ENCODE measurements at regions of chr2 and their contacts with region 1.

Region 1: GRCh38 chr2:43524177-43524965 is 71.5 kb downstream of the THADA start:
- DNase-seq: no peak
- ATAC-seq: no peak
- H3K4me3 Mint-ChIP-seq: no peak overlapping the region
- H3K27ac Mint-ChIP-seq: no peak overlapping the region
- H3K4me1 Mint-ChIP-seq: no peaks in the 10 kb centered on the region
- H3K27me3 Mint-ChIP-seq: no peaks in the 10 kb centered on the region
- CTCF ChIP-seq: no peak

Region 2: GRCh38 chr2:43461453-43462073 is 62.8 kb before region 1 on chr2:
- CTCF ChIA-PET with region 1: no interaction called
- POLR2A ChIA-PET with region 1: interaction called, 12 read pairs
- DNase-seq: no peak
- ATAC-seq: no peak
- H3K4me3 Mint-ChIP-seq: no peak overlapping the region
- H3K27ac Mint-ChIP-seq: peak overlapping the region; percentile 13; the same call in 1 of the 2 replicates
- H3K4me1 Mint-ChIP-seq: peaks cover 15% of the 10 kb centered on the region
- H3K27me3 Mint-ChIP-seq: no peaks in the 10 kb centered on the region
- CTCF ChIP-seq: no peak

Region 3: DNA sequence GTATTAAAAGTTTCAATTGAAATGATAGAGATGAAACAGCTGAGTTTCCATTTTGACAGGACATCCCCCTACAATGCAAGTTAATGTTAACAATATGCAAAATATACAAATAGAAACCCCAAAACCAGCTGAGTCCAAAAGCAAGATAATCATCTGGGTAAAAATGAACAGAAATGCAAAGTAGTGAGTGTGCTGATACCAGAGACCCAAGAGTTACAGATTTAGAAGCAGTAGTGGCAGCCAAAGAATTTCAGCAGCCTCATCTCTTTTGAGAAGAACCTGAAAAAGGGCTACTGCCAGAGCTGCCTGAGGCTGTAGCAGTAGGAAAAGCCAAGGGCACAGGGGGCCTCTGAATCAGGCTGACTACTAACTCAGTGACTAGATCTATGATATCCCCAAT is 11.2 kb before region 1 on chr2:
- CTCF ChIA-PET with region 1: no interaction called
- POLR2A ChIA-PET with region 1: no interaction called
- DNase-seq: no peak
- ATAC-seq: no peak
- H3K4me3 Mint-ChIP-seq: no peak overlapping the region
- H3K27ac Mint-ChIP-seq: no peak overlapping the region
- H3K4me1 Mint-ChIP-seq: peaks cover 12% of the 10 kb centered on the region
- H3K27me3 Mint-ChIP-seq: no peaks in the 10 kb centered on the region
- CTCF ChIP-seq: no peak

Measured in WTC11 (cell line).